Endothelial cell of umbilical vein (primary cell): ENCODE measurements at regions of chr2 and their contacts with region 1.

Region 1: DNA sequence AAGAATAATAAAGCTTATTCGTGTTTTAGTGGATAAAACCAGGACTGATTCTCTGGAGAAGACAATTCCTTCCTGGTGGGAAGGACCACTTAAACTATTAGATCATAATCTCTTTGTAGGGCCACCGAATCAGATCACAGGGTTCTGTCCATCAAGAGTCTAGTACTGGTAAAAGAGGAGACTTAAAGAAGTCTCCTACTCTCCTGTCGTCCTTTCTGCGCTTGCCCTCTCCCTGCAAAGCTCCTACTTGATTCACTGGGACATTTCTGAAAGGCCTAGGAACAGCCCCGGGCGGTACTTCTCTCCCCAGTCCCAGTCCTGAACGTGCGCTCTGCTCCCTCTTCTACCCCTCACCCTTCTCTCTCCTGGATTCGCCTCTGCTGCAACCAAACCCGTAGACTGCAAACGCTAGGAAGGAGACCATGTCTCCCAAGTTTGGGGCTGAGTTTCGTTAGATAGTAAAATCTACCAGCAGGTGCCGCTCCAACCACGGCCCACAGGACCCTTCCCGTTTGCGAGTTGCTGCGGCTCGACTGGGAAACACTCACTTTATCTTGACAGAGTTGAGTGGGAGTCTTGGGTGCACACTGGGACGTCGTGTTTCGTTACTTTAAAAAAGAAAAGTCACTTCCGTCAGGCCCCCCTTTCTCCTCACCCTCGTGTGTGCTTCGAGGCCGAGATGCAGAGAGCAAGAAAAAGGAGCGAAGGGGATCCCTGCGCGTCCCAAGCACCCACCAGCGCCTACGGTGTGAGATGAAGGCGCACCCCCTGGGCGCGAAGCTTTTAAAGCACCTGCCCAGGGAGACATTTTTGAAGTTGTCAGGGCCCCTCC is 923 bp downstream of the FIGLA start:
- DNase-seq: peak; percentile 77
- H3K4me3 ChIP-seq: no peak overlapping the region
- H3K27ac ChIP-seq: no peak overlapping the region
- H3K4me1 ChIP-seq: peaks cover 4% of the 10 kb centered on the region
- H3K27me3 ChIP-seq: peaks cover 45 to 69% of the 10 kb centered on the region in 2 experiments
- CTCF ChIP-seq: peak; percentile 70 to 80
- POLR2A ChIP-seq: no peak

Region 2: GRCh38 chr2:70656421-70657010 is 133.0 kb before region 1 on chr2:
- CTCF ChIA-PET with region 1: interaction called, 4 read pairs
- POLR2A ChIA-PET with region 1: no interaction called
- dilution Hi-C with region 1: no loop called
- intact Hi-C with region 1: loop called (anchors 2 kb)
- DNase-seq: no peak
- H3K4me3 ChIP-seq: no peak overlapping the region
- H3K27ac ChIP-seq: no peak overlapping the region
- H3K4me1 ChIP-seq: no peaks in the 10 kb centered on the region
- H3K27me3 ChIP-seq: peaks cover 14 to 27% of the 10 kb centered on the region in 2 experiments
- CTCF ChIP-seq: no peak
- POLR2A ChIP-seq: no peak

Region 3: GRCh38 chr2:70828914-70829824 is 39.6 kb after region 1 on chr2:
- CTCF ChIA-PET with region 1: interaction called, 10 read pairs
- POLR2A ChIA-PET with region 1: no interaction called
- dilution Hi-C with region 1: no loop called
- intact Hi-C with region 1: no loop called
- DNase-seq: peak; percentile 91
- H3K4me3 ChIP-seq: no peak overlapping the region
- H3K27ac ChIP-seq: peak overlapping the region; percentile 87
- H3K4me1 ChIP-seq: peaks cover 20% of the 10 kb centered on the region
- H3K27me3 ChIP-seq: no peaks in the 10 kb centered on the region
- CTCF ChIP-seq: no peak
- POLR2A ChIP-seq: no peak

Region 4: GRCh38 chr2:70861777-70862625 is 72.5 kb after region 1 on chr2:
- CTCF ChIA-PET with region 1: interaction called, 46 read pairs
- POLR2A ChIA-PET with region 1: no interaction called
- dilution Hi-C with region 1: no loop called
- intact Hi-C with region 1: loop called (anchors 1 kb)
- DNase-seq: peak; percentile 79
- H3K4me3 ChIP-seq: no peak overlapping the region
- H3K27ac ChIP-seq: no peak overlapping the region
- H3K4me1 ChIP-seq: no peaks in the 10 kb centered on the region
- H3K27me3 ChIP-seq: peaks cover 36 to 50% of the 10 kb centered on the region in 2 experiments
- CTCF ChIP-seq: peak; percentile 95 to 99
- POLR2A ChIP-seq: no peak

Region 5: DNA sequence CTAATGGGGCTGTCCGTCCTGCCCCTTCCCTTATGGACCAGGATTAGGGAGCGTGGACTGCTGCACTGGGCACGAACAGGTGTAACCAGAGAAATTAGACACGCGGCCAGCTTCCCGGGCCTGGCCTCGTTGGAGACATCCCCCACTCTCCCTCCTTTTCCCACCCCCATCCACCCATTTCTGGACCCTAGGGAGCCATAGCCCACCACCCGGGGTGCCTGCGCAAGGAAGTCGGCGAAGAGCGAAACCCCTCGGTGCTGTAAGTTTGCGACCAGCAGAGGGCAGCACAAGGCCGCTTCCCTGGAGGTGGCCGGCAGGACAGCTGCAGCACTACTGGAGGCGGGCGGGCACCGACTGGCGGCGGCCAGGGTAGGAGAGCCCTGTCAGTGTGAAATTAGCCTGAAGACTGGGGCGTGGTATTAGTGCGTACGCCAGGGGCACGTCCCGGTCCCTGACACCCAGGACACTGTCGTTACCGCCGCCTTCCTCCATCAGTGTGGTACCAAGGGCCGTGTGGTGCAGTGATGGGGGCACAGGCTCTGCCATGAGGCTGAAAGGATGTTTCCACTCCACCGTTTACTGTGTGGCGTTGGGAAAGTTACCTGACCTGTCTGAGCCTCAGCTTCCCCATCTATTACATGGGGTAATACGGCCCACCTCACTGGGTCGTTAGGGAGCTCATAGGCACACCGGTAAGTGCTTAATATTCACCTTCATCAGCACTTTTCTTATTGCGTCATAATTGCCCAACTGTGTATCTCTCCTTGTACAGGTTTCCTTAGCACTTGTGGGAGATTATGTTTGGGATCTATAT is 82.1 kb after region 1 on chr2:
- CTCF ChIA-PET with region 1: interaction called, 61 read pairs
- POLR2A ChIA-PET with region 1: no interaction called
- dilution Hi-C with region 1: no loop called
- intact Hi-C with region 1: loop called (anchors 1 kb)
- DNase-seq: peak; percentile 77
- H3K4me3 ChIP-seq: no peak overlapping the region
- H3K27ac ChIP-seq: no peak overlapping the region
- H3K4me1 ChIP-seq: peaks cover 2% of the 10 kb centered on the region
- H3K27me3 ChIP-seq: peaks cover 15 to 27% of the 10 kb centered on the region in 2 experiments
- CTCF ChIP-seq: peak; percentile 95
- POLR2A ChIP-seq: no peak

Region 6: DNA sequence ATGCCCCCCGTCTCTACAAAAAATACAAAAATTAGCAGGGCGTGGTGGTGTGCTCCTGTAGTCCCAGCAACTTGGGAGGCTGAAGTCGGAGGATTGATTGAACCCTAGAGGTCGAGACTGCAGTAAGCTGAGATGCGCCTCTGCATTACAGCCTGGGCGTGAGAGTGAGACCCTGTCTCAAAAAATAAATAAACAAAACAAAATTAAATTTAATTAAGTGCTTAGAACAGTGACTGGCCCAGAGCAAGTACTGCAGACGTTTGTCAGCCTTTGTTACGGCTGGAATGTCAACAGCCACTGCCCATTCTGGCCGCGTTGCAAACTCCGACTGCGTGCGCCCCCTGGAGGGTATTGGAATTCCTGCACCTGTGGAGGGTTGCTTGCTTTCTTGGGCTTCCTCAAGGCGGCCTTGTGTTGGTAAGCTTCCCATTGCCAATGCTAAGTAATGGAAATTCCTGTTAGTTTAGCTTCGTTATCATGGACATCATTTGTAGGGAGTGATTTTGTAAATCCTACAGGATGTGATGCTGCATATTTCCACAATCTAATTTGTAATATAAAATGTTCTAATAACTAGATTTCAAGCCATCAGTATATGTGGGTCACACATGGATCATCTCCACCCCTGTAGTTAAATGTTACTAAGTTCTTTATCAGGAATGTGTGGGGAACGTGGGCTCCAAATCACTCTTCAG is 130.3 kb after region 1 on chr2:
- CTCF ChIA-PET with region 1: interaction called, 30 read pairs
- POLR2A ChIA-PET with region 1: no interaction called
- dilution Hi-C with region 1: no loop called
- intact Hi-C with region 1: loop called (anchors 1 kb)
- DNase-seq: peak; percentile 88
- H3K4me3 ChIP-seq: no peak overlapping the region
- H3K27ac ChIP-seq: no peak overlapping the region
- H3K4me1 ChIP-seq: peaks cover 16% of the 10 kb centered on the region
- H3K27me3 ChIP-seq: peaks cover 8 to 10% of the 10 kb centered on the region in 2 experiments
- CTCF ChIP-seq: peak; percentile 93 to 96
- POLR2A ChIP-seq: no peak

Region 7: DNA sequence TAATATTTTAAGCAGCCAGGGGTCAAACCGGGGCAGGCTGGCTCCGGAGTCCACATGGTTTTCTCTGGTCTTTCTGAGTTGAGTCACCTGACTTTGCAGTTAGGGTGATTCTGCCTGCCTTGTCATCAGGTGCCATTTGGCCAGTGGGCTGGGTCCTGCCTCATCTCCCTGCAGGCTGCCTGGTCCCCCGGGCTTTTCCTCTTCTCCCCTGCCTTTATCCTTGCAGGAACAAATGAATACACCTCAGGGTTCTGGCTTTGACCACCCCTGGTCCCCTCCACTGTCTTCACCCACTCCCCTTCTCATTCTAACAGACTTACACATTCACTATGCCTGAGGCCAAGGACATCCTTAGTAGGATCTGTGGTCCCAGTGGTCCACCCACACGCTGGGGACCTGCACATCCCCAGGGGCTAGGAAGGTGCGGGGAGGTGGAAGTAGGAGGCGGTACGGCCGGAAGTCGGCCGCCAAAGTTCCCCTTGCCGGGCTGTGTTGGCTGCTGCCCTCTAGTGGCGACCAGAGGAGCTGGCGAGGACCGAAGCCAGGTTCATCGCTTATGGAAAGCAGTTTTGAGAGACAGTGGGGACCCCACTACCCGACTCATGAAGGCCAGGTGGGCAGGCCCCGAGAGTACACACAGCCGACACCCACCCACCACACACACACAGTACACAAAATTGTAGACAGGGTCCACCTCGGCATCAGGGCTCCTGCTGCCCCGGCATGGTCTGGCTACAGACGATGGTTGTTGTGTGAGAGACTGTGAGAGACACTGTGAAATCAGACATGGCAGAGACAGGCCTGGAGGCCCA is 211.5 kb after region 1 on chr2:
- CTCF ChIA-PET with region 1: interaction called, 11 read pairs
- POLR2A ChIA-PET with region 1: no interaction called
- dilution Hi-C with region 1: no loop called
- intact Hi-C with region 1: no loop called
- DNase-seq: peak; percentile 43
- H3K4me3 ChIP-seq: no peak overlapping the region
- H3K27ac ChIP-seq: no peak overlapping the region
- H3K4me1 ChIP-seq: no peaks in the 10 kb centered on the region
- H3K27me3 ChIP-seq: peaks cover 4 to 5% of the 10 kb centered on the region in 2 experiments
- CTCF ChIP-seq: peak; percentile 95 to 97
- POLR2A ChIP-seq: no peak